ENCODE measurements at regions of chr12 and their contacts with region 1.

Region 1: DNA sequence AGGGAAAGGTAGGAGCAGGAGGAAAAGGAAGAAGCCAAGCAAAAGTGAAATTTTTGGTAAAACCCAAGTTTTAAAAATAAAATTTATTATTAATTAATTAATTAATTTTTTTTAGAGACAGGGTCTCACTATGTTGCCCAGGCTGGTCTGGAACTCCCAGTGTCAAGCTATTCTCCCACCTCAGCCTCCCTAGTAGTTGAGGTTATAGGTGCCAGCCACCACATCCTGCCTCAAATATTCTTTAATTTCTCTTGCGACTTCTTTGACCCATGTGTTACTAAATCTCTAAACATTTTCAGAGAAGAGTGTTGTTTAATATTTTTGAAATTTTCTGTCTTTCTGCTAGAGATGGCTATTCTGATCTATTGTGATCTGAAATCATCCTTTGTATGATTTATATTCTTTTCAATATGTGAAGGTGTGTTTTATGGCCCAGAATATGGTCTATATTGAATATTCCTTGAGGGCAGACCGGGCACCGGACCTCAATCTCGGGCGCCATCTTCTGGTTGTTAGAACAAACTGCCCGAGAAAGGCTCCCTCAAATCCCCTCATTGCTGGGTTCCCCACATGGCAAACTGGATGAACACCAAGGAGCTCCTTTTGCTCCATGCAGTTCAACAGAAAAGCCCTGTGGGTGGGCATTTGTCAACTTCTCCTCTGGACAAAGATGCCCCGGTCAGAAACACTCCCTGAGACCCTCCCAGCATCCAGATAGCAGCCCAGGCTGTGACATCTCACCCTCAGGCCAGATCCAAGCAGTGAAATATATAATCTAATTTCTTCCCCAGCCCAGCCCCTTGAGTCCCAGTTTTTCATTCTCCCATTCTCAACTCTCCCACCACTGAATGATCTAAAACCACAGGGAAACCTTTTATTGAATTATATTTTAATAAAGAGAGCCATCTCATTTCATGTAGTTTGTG is 110.5 kb downstream of the ASCL4 start:
- DNase-seq: peak; percentile 35 to 74 (median 62)
- H3K4me3 ChIP-seq: no peak overlapping the region
- H3K27ac ChIP-seq: no peak overlapping the region
- H3K4me1 ChIP-seq: no peaks in the 10 kb centered on the region
- H3K27me3 ChIP-seq: peaks cover 15% of the 10 kb centered on the region
- CTCF ChIP-seq: peak; percentile 42 to 71 (median 66)
- POLR2A ChIP-seq: no peak

Region 2: DNA sequence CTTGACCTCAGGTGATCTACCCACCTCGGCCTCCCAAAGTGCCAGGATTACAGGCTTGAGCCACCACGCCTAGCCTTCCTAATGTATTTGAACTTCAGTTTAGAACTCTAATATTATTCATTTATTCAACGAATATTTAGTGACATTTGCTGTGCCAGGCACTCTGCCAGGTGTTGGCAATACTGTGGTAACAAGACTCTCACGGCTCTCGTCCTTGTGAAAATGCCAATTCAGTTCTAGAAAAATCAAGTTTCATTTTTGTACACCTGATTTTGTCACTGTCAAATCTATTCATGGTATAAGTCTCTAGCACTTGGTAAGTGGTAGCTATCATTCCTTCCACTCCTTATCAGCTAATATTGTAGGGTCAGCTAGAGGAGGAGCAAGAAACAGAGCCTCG is 205.7 kb before region 1 on chr12:
- intact Hi-C with region 1: loop called (anchors 5 kb)
- DNase-seq: peak in 4 of 7 donors; percentile 15 to 40 (median 26)
- H3K4me3 ChIP-seq: no peak overlapping the region
- H3K27ac ChIP-seq: no peak overlapping the region
- H3K4me1 ChIP-seq: no peaks in the 10 kb centered on the region
- H3K27me3 ChIP-seq: peaks cover 4% of the 10 kb centered on the region
- CTCF ChIP-seq: no peak
- POLR2A ChIP-seq: no peak

Region 3: GRCh38 chr12:107760809-107761501 is 124.1 kb before region 1 on chr12 and contains the start of gene PRDM4:
- intact Hi-C with region 1: loop called in 1 of 2 experiments (anchors 10 kb)
- DNase-seq: peak; percentile 93 to 97 (median 95)
- H3K4me3 ChIP-seq: peak within 1 kb of the TSS; percentile 63 to 93 (median 78)
- H3K27ac ChIP-seq: peak within 1 kb of the TSS in 4 of 5 donors; percentile 46 to 93 (median 76)
- H3K4me1 ChIP-seq: peaks cover 19 to 33% of the 10 kb centered on the region in 2 donors
- H3K27me3 ChIP-seq: no peaks in the 10 kb centered on the region
- CTCF ChIP-seq: peak in 2 of 6 experiments; percentile 19 to 51
- POLR2A ChIP-seq: peak; percentile 92
- total RNA-seq, gene PRDM4: 16.0 to 31.5 (median 22.3) TPM

Measured in adrenal gland (tissue), 19 donors.